Left cardiac atrium (tissue), 4 donors: ENCODE measurements at regions of chr4 and their contacts with region 1.

Region 1: DNA sequence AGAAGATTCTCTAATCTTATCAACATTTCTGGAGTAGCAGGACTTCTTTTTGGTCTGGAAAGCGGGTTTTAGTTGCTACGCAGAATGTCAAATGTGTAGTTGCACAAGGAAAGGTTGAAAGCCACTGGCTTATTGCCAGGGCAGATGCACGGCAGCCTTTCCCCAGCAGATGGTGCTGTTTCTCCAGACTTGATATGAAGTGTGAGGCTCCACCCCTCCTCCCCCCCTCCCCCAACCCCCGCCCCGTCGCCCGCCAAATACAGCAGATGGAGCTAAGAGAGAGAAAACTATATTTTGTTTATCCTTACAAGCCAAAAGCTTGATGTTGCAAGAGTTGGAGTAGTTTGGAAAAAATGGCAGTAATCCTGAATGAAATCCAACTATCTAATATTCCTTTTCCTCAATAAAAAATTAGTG is 32.0 kb downstream of the ENOPH1 start:
- DNase-seq: peak; percentile 83
- ATAC-seq: peak; percentile 89 to 93

Region 2: DNA sequence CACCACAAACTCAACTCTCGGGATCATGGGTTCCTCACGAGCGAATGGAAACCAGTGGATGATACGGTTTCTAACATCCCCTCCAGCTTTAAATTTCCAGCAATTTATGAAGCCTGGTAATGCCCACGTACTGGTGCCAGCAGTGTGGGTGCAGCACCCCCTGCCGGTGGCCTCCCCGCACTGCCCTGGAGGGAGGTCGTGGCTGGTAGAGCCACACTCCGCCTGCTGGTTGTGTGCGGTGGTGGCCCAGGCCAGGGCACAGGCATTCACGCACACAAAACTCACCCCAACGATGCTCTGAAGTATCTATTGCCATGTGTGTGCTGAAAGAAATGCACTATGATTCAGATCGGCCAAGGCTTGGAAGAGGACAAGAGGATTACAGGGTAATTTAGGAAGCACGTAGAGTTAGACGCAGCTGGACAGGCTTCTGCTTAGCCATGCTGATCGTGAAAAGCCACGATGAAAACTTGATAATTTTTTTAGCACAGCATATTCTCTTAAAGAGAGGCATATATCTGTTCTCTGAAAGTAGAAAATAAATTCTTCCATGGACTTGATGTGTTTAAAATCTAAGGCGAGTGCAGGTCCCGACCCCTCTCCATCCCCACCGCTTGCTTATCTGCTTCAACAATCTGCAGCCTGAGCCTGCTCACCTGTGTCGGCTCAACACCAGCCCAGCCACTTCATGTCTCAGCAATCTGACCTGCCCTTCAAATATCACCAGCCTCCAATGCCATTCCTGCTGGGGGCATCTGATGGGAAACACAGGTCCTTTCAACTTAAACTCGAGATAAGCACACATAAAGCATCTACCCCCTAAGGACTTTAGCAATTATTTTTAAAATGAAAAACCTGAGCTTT is 277.1 kb after region 1 on chr4:
- intact Hi-C with region 1: loop called (anchors 5 kb)
- DNase-seq: peak; percentile 65
- ATAC-seq: peak; percentile 95 to 96

Region 3: DNA sequence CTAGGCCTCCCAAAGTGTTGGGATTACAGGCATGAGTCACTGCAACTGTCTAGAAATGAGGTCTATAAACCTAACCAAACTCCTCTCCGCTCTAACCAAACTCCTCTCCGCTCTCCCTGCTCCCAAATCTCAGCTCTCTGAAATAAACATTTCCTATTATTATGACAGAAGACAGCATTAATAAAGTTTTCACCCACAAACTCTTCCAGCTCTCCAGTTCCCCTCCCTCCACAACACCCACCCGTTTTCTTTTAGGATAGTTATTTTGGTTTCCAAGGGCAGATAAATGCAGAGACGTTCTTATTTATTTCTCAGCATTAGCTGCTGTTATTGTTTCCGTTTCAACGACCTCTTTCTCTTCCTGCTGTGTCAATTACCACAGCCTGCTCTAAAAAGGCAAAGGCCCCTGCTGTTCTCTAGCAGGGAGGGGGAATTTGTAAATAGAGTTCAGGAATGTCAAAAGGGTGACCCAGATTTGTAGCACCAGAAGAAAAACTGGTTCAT is 349.5 kb after region 1 on chr4:
- intact Hi-C with region 1: loop called in 1 of 2 experiments (anchors 10 kb)
- DNase-seq: no peak
- ATAC-seq: peak in 1 of 2 donors; percentile 17

Region 4: GRCh38 chr4:83261307-83261706 is 798.9 kb after region 1 on chr4:
- intact Hi-C with region 1: loop called in 1 of 2 experiments (anchors 5 kb)
- DNase-seq: no peak
- ATAC-seq: no peak